HAP-1 (cell line): ENCODE measurements at regions of chr1 and their contacts with region 1.

Region 1: GRCh38 chr1:43227143-43227764 is 42.5 kb upstream of the TMEM125 start:
- DNase-seq: peak; percentile 56 to 91
- H3K4me3 ChIP-seq: no peak overlapping the region
- H3K4me1 ChIP-seq: no peaks in the 10 kb centered on the region
- H3K27me3 ChIP-seq: peaks cover 2% of the 10 kb centered on the region

Region 2: DNA sequence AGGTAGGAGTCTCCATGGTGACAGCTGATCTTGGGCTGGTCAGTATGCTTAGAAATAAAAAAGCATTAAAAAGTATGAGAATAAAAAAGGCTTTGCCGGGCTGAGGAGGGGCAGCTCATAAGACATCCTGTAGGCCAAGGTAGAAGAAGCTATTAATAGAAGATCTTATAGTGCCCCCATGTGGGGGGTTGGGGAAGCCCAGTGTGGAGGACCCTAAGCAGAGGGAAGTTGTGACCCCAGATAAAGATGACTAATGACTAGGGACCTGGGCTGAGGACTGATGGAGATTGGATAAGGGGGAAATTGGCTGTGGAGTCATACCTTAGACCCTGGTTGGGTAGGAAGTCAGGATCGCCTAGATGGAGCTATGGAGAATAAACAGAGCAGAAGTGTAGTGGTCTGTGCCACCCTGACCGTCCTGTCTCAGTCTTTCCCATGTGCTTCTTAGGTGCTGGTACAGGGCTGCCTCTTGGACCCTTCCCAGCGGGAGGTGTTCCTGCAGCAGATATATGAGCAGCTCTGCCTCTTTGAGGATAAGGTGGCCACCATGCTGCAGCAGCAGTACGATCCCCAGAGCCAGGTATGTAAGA is 187.5 kb after region 1 on chr1:
- in situ Hi-C with region 1: loop called (anchors 5 kb)
- DNase-seq: peak; percentile 43 to 78
- H3K4me3 ChIP-seq: no peak overlapping the region
- H3K4me1 ChIP-seq: no peaks in the 10 kb centered on the region
- H3K27me3 ChIP-seq: no peaks in the 10 kb centered on the region

Region 3: DNA sequence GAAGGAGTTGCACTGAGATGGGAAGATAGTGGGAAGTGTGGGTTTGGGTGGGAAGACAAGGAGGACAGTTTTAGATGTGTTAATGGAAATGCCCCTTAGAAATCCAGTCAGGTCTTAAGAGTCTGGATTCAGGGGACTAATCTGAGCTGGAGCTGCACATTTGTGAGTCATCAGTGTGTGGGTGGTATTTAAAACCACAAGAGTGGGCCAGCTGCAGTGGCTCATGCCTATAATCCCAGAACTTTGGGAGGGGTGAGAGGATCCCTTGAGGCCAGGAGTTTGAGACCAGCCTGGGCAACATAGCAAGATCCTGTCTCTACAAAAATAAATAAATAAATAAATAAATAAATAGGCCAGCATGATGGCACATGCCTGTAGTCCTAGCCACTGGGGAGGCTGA is 845.0 kb after region 1 on chr1:
- in situ Hi-C with region 1: loop called (anchors 25 kb)
- DNase-seq: no peak
- H3K4me3 ChIP-seq: no peak overlapping the region
- H3K4me1 ChIP-seq: no peaks in the 10 kb centered on the region
- H3K27me3 ChIP-seq: peaks cover 3% of the 10 kb centered on the region; the same call in 1 of the 2 replicates